GM12878 (cell line): ENCODE measurements at regions of chr1 and their contacts with region 1.

Region 1: DNA sequence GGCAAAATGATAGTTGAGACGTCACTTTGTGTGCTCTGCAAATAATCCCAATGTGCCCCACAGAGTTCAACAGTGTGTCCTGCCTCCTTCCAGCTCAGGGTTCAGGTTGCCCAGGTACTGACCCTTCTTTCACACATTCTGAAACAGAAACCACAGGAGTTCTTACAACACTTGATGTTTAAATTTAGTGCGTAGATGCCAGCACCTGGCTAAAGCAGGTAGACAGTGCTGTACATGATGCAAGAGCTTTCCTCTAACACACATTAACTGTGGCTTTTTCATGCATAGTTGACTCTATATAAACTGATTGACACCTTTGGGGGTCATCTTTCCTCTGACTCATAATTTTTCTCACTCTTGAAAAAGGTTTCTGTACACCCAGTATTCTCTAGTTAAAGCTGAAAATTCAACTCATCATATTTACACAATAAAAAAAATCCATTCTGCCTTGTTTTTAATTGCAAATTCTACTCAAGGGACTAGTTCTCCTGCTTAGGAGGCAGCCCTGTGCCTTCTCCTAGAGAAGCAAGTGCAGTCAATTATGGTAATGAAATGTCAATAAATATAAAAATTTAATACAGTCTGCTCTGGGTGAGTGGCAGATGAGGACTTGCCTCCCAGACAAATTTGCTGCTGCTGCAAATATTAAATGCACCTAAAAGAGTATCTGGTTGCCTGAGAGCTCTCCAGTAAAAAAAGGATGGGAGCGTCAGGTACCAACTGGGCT is 91.4 kb downstream of the NR5A2 start:
- DNase-seq: no peak
- ATAC-seq: peak; percentile 82
- H3K4me3 ChIP-seq: no peak overlapping the region
- H3K27ac ChIP-seq: no peak overlapping the region
- H3K4me1 ChIP-seq: no peaks in the 10 kb centered on the region; the same call in 1 of the 2 replicates
- H3K27me3 ChIP-seq: no peaks in the 10 kb centered on the region; a peak in 1 of 4 replicates
- CTCF ChIP-seq: no peak
- EP300 ChIP-seq: peak in 1 of 2 experiments; percentile 70; a peak in 1 of 4 replicates
- POLR2A ChIP-seq: no peak
- RAD21 ChIP-seq: no peak

Region 2: GRCh38 chr1:200062143-200062542 is 56.8 kb before region 1 on chr1:
- CTCF ChIA-PET with region 1: no interaction called
- POLR2A ChIA-PET with region 1: no interaction called
- RAD21 ChIA-PET with region 1: no interaction called
- SMC1A ChIA-PET with region 1: no interaction called
- in situ Hi-C with region 1: no loop called
- intact Hi-C with region 1: no loop called
- DNase-seq: no peak
- ATAC-seq: no peak
- H3K4me3 ChIP-seq: no peak overlapping the region
- H3K27ac ChIP-seq: no peak overlapping the region
- H3K4me1 ChIP-seq: no peaks in the 10 kb centered on the region
- H3K27me3 ChIP-seq: 0 out of 4 replicates have a peak, but pooled peaks cover 0 to 3% of the 10 kb centered on the region in 2 experiments
- CTCF ChIP-seq: no peak
- EP300 ChIP-seq: no peak
- POLR2A ChIP-seq: no peak
- RAD21 ChIP-seq: no peak

Region 3: DNA sequence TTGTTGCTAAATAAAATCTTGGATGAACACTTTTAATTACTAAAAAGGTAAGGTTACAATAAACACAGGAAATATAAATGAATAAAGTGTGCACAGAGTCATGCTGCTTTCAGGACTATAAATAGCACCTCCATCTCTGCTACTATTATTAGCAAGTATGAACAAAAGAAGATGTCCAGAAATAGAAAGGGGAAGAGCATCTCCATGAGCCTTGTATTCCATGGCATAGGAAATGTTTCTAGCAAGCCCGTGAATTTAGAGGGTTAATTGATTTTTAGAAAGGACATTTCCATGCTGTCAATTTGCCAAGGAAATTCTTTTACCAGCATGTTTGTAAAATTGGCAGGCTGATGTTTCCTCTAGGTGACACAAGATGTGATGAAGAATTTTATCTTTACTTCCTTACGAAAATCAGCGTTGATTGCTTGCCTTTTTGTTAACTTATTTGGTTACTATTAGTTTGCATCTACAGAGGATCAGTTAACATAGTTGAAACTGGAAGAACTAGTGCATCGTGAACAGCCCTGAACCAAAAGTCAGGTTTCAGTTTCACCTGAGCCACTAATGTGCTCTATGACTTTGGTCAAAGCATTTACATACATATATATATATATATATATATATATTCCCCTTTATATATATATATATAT is 46.2 kb before region 1 on chr1:
- CTCF ChIA-PET with region 1: no interaction called
- POLR2A ChIA-PET with region 1: no interaction called
- RAD21 ChIA-PET with region 1: no interaction called
- SMC1A ChIA-PET with region 1: no interaction called
- in situ Hi-C with region 1: no loop called
- intact Hi-C with region 1: no loop called
- DNase-seq: peak; percentile 4
- ATAC-seq: peak; percentile 85
- H3K4me3 ChIP-seq: peak overlapping the region; percentile 33
- H3K27ac ChIP-seq: no peak overlapping the region
- H3K4me1 ChIP-seq: peaks cover 4% of the 10 kb centered on the region
- H3K27me3 ChIP-seq: peaks cover 0 to 6% of the 10 kb centered on the region in 2 experiments; a peak in 2 of 4 replicates
- CTCF ChIP-seq: no peak
- EP300 ChIP-seq: no peak
- POLR2A ChIP-seq: no peak
- RAD21 ChIP-seq: no peak

Region 4: GRCh38 chr1:200128944-200129885 is 10.3 kb after region 1 on chr1:
- CTCF ChIA-PET with region 1: interaction called, 6 read pairs
- POLR2A ChIA-PET with region 1: interaction called, 15 read pairs
- RAD21 ChIA-PET with region 1: interaction called, 41 read pairs
- SMC1A ChIA-PET with region 1: interaction called, 89 read pairs
- in situ Hi-C with region 1: no loop called
- intact Hi-C with region 1: no loop called
- DNase-seq: no peak
- ATAC-seq: peak; percentile 90
- H3K4me3 ChIP-seq: no peak overlapping the region
- H3K27ac ChIP-seq: no peak overlapping the region
- H3K4me1 ChIP-seq: peaks cover 6% of the 10 kb centered on the region
- H3K27me3 ChIP-seq: no peaks in the 10 kb centered on the region
- CTCF ChIP-seq: no peak
- EP300 ChIP-seq: peak; percentile 65 to 75; a peak in 2 of 4 replicates
- POLR2A ChIP-seq: no peak
- RAD21 ChIP-seq: no peak